Sigmoid colon (tissue), 7 donors: ENCODE measurements at regions of chr10 and their contacts with region 1.

Region 1: DNA sequence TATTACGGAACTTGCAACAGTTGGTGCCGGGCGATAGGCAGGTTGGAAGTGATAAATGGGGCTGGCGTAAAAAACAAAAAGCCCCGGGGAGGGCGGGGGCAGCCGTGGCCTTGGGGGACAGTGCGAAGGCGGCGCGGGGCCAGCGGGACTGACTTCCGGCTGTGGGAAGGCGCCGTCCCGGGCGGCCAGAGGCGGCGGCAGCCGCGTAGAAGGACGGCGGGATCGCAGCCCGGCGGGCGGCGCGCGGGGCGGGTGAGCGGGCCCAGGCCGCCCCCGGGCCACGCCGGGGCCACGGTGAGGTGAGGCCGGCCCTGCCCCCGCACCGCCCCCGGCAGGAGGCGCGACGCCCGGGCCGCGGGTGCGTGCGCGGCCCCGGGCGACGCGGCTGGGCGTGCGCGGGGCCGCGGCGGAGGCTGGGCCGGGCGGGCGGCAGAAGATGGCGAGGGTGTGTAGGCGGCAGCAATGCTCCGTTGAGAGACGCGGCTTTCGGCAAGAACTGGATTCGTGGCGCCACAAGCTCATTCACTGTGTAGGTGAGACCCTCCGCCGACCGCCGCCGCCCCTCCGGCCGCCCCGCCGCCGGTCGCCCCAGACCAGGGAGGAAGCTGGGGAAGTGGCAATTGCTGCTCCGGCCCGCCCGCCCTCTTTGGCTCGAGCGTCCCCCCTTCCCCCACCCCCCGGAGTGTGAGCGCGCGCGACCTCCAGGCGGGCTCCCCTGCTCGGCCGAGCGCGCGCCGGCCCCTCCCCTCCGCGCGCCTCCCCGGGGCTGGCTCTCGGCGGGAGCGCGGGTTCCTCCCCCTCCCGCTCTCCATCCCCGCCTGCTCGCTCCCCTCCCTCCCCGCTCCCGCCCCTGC is at the start of gene LCOR:
- DNase-seq: peak; percentile 93
- H3K4me3 ChIP-seq: peak within 1 kb of the TSS; percentile 68 to 100 (median 96)
- H3K27ac ChIP-seq: peak within 1 kb of the TSS; percentile 96 to 98 (median 96)
- H3K4me1 ChIP-seq: peaks cover 0 to 42% (median 37%) of the 10 kb centered on the region in 4 donors
- H3K27me3 ChIP-seq: no peaks in the 10 kb centered on the region
- CTCF ChIP-seq: no peak
- EP300 ChIP-seq: no peak
- POLR2A ChIP-seq: peak; percentile 58 to 61
- total RNA-seq, gene LCOR: 19.6 to 270 (median 23.6) TPM

Region 2: DNA sequence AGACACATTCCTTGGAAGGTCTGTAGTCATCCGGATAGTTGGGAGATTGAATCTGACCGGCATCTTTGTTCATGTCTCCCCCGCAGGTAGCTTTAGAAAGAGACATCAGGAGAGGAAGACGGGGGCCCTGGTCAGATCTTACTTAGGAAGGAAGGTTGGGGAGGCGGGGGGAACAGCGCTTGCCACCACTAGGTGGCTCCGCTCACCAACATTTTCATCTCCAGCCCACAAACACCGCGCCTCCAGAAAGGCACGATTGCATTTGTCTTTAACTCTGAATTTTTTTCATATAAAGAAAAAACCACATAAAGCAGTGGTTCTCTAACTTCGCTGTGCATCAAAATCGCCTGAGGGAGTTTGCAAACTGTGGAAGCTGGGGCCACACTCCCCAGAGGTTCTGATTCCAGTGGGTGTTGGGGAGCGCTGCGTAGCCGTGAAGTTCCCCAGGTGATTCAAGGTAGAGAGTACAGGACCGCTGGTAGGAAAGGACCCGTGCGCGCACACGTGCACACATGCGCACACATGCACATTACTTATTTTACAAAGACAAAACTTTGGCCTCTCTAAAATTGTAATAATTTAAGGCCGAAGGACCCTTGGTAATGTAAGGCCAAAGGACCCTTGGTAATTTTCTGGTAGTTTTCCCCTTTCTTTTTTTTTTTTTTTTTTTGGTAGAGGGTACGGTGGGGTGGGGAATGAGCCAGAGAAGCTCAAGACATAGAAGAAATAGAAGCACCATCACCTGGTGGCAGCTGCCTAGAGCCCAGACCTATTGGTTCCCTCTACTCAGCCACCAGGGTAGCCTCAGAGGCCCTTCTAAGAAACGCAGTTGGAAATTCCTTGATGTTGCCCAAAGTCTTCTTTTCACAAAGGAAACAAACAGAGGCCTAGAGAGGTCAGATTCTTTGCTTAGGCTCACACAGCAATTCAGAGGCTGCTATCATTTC is 435.9 kb before region 1 on chr10:
- intact Hi-C with region 1: loop called (anchors 5 kb)
- DNase-seq: peak; percentile 87
- H3K4me3 ChIP-seq: no peak overlapping the region
- H3K27ac ChIP-seq: no peak overlapping the region
- H3K4me1 ChIP-seq: peaks cover 0 to 13% (median 7%) of the 10 kb centered on the region in 4 donors
- H3K27me3 ChIP-seq: peaks cover 0 to 9% (median 0%) of the 10 kb centered on the region in 3 donors
- CTCF ChIP-seq: peak; percentile 79 to 88 (median 82)
- EP300 ChIP-seq: no peak
- POLR2A ChIP-seq: no peak

Region 3: GRCh38 chr10:96513698-96514561 is 318.2 kb before region 1 on chr10 and contains the start of gene TLL2:
- intact Hi-C with region 1: loop called (anchors 5 kb)
- DNase-seq: peak; percentile 94
- H3K4me3 ChIP-seq: peak within 1 kb of the TSS; percentile 29 to 60 (median 54)
- H3K27ac ChIP-seq: peak within 1 kb of the TSS in 3 of 4 donors; percentile 52 to 64 (median 58)
- H3K4me1 ChIP-seq: peaks cover 0 to 26% (median 22%) of the 10 kb centered on the region in 4 donors
- H3K27me3 ChIP-seq: peaks cover 0 to 20% (median 0%) of the 10 kb centered on the region in 3 donors
- CTCF ChIP-seq: peak; percentile 60 to 80 (median 73)
- EP300 ChIP-seq: no peak
- POLR2A ChIP-seq: no peak
- total RNA-seq, gene TLL2: 0.14 to 2.2 (median 0.26) TPM

Region 4: DNA sequence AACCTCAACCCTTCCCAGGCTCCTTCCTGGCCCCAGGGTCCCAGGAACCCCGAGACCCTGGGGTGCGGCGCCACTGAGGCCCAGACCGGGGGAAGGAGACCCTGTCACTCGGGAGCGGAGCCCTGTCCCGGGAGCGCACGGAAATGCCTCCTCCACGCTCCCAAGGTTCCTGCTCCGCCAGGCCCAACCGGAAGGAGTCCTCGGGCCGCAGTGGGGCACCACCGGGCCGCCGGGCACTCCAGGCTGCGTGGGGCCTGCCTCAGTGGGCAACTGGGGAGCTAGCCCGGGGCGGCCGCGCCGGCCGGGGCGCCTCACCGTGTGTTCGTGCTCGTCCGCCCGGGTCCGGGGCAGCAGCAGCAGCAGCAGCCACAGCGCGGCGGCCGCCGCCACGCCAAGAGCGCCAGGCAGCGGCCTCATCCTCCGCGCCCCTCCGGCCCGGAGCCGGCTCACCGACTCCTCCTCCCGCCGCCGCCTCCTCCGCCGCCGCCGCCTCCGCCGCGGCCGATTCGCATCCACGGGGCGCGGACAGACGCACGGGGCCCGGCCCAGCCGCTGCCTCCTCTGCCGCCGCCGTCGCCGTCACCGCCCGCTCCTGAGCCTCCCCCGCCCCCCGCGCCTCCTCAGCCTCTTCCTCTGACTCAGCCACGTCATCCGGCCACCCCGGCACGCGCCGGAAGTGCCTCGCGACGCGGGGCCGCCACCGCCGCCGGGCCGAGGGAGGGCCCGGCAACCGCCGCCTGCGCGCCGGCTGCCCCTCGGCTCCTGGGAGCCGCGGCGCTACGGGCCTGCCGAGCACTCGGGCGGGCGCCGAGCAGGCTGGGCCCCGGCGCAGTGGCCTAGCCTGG is 245.5 kb before region 1 on chr10 and contains the start of gene TM9SF3:
- intact Hi-C with region 1: loop called (anchors 1 kb)
- DNase-seq: peak; percentile 96
- H3K4me3 ChIP-seq: peak within 1 kb of the TSS; percentile 76 to 95 (median 83)
- H3K27ac ChIP-seq: peak within 1 kb of the TSS; percentile 96 to 99 (median 96)
- H3K4me1 ChIP-seq: peaks cover 0 to 57% (median 53%) of the 10 kb centered on the region in 4 donors
- H3K27me3 ChIP-seq: no peaks in the 10 kb centered on the region
- CTCF ChIP-seq: no peak
- EP300 ChIP-seq: no peak
- POLR2A ChIP-seq: peak in 1 of 2 donors; percentile 16
- total RNA-seq, gene TM9SF3: 104 to 115 (median 108) TPM

Region 5: GRCh38 chr10:96642973-96643372 is 189.1 kb before region 1 on chr10:
- intact Hi-C with region 1: no loop called
- DNase-seq: peak; percentile 70
- H3K4me3 ChIP-seq: no peak overlapping the region
- H3K27ac ChIP-seq: no peak overlapping the region
- H3K4me1 ChIP-seq: no peaks in the 10 kb centered on the region
- H3K27me3 ChIP-seq: no peaks in the 10 kb centered on the region
- CTCF ChIP-seq: peak in 2 of 4 experiments; percentile 11 to 23
- EP300 ChIP-seq: no peak
- POLR2A ChIP-seq: no peak

Region 6: DNA sequence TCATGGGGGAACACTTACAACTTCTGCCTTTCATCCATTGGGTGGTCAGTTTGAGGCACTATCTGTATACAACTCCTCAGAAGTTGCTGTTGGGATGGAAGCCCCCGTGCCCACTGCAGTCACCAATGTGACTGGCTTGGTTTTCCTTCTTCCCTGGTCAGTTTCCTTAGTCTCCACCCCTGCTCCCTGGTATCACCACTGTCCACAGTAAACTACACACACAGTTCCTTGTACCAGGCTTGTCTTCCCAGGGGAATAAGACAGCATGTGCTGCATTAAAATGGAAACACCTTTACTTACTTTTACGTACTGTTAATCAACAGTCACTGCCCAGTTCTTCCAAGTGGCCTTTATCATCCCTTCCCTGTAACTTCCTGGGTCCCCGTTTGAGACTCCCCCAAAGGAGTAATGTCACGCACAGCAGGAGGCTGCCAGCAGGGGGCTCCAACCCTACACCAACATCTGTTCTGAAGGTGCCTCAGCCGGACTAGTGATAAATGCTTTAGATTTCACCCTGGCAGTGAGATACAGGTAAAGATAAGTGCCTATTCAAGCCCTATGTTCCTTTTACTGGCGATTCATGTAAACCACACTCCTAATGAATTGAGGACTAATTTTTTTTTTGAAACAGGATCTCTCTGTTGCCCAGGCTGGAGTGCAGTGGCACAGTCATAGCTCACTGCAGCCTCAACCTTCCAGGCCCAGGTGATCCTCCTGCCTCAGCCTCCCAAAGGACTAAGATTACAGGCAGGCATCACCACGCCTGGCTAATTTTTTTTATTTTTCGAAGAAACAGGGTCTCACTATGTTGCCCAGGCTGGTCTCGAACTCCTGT is 66.5 kb before region 1 on chr10:
- intact Hi-C with region 1: loop called (anchors 1 kb)
- DNase-seq: peak; percentile 74
- H3K4me3 ChIP-seq: no peak overlapping the region
- H3K27ac ChIP-seq: no peak overlapping the region
- H3K4me1 ChIP-seq: no peaks in the 10 kb centered on the region
- H3K27me3 ChIP-seq: no peaks in the 10 kb centered on the region
- CTCF ChIP-seq: peak; percentile 42 to 81 (median 74)
- EP300 ChIP-seq: no peak
- POLR2A ChIP-seq: no peak

Region 7: GRCh38 chr10:97020452-97021400 is 188.6 kb after region 1 on chr10:
- intact Hi-C with region 1: loop called (anchors 2 kb)
- DNase-seq: peak; percentile 83
- H3K4me3 ChIP-seq: peak overlapping the region in 1 of 4 donors; percentile 4
- H3K27ac ChIP-seq: peak overlapping the region; percentile 65 to 80 (median 74)
- H3K4me1 ChIP-seq: peaks cover 0 to 39% (median 35%) of the 10 kb centered on the region in 4 donors
- H3K27me3 ChIP-seq: no peaks in the 10 kb centered on the region
- CTCF ChIP-seq: peak in 1 of 4 experiments; percentile 14
- EP300 ChIP-seq: no peak
- POLR2A ChIP-seq: no peak

Region 8: GRCh38 chr10:97037365-97038361 is 205.6 kb after region 1 on chr10:
- intact Hi-C with region 1: no loop called
- DNase-seq: peak; percentile 88
- H3K4me3 ChIP-seq: peak overlapping the region in 3 of 4 donors; percentile 27 to 49 (median 48)
- H3K27ac ChIP-seq: peak overlapping the region in 2 of 4 donors; percentile 10 to 39
- H3K4me1 ChIP-seq: peaks cover 0 to 12% (median 9%) of the 10 kb centered on the region in 4 donors
- H3K27me3 ChIP-seq: no peaks in the 10 kb centered on the region
- CTCF ChIP-seq: peak; percentile 73 to 86 (median 80)
- EP300 ChIP-seq: no peak
- POLR2A ChIP-seq: no peak

Region 9: GRCh38 chr10:97407211-97407951 is 575.3 kb after region 1 on chr10:
- intact Hi-C with region 1: no loop called
- DNase-seq: peak; percentile 76
- H3K4me3 ChIP-seq: no peak overlapping the region
- H3K27ac ChIP-seq: peak overlapping the region in 1 of 4 donors; percentile 0
- H3K4me1 ChIP-seq: peaks cover 0 to 9% (median 9%) of the 10 kb centered on the region in 4 donors
- H3K27me3 ChIP-seq: no peaks in the 10 kb centered on the region
- CTCF ChIP-seq: peak; percentile 41 to 85 (median 80)
- EP300 ChIP-seq: no peak
- POLR2A ChIP-seq: no peak